Caki2 (cell line): ENCODE measurements at regions of chr1 and their contacts with region 1.

Region 1: DNA sequence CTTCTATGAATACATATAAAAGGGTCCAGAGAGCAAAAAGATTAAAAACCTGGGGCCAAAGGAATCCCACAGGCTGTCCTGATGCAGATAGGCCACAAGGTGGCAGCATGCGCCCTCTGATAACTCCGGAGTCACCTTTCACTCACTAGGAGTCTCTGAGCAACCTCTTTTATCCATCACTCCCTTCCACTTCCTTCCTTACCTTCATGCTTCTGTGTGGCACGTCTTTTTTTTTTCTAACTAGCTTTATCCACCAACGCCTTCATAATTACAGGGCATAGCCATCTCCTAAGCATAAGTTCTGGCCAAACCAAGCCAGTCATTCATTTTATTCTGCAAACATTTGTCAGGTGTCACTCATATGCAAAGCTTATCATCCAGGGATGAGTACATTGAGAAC is 3.9 kb upstream of the PGLYRP4 start:
- DNase-seq: peak; percentile 42

Region 2: DNA sequence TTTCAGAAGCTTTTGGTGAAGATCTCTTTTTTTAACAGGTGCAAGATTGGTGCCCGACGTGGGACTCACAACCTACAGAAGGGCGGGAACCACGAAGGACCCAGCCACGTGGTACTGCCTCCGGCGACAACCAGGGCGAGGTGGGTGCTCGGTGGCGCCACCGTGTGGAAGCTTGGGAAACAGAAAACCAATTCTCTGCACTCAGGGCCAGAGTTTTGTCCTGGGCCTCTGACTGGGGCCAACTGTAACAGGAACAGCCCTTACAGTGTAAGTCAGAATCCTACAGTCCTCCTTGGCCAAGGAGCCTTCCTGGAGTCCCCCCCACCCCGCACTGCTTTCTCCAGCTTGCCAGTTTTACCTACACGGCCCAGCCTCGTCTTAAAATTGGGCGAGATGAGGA is 52.2 kb after region 1 on chr1:
- in situ Hi-C with region 1: no loop called
- DNase-seq: peak; percentile 10

Region 3: DNA sequence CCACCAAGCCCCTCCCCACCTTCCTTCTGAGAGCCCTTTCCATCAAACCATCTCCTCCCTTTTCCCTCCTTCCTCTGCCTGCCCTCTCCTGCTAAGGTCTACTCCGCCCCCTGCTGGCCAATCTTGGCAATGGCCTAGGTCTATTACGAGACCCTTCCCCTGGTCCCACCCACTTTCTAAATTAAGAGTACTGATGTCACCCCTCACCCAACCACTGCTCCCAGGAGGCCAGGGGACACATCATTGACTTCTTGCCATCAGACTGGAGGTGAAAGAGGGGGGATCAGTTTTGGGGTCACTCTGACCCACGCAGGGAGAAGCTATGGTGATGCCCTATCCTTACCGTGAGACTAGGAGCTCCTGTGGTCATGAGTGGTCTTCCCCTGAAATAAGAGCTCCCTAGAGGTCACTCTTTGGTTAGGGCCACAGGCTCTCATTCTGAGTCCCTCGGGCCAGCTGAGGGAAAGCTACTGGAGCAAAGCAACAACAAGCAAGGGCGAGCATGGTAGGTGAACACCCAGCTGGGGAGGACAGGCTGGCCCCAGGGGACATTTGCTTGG is 142.5 kb after region 1 on chr1:
- in situ Hi-C with region 1: loop called (anchors 25 kb)
- DNase-seq: peak; percentile 51